ENCODE measurements at regions of chr4 and their contacts with region 1.

Region 1: GRCh38 chr4:38509551-38509950 is 154.4 kb upstream of the KLF3 start:
- DNase-seq: peak in 12 of 14 experiments; percentile 30 to 87 (median 46)
- ATAC-seq: peak; percentile 93
- H3K4me3 ChIP-seq: peak overlapping the region; percentile 65
- H3K4me3 Mint-ChIP-seq: peak overlapping the region; percentile 82
- H3K27ac ChIP-seq: peak overlapping the region; percentile 60 to 78
- H3K27ac Mint-ChIP-seq: peak overlapping the region; percentile 86
- H3K4me1 ChIP-seq: peaks cover 63% of the 10 kb centered on the region
- H3K4me1 Mint-ChIP-seq: peaks cover 84% of the 10 kb centered on the region
- H3K27me3 ChIP-seq: no peaks in the 10 kb centered on the region
- H3K27me3 Mint-ChIP-seq: no peaks in the 10 kb centered on the region
- CTCF ChIP-seq: no peak

Region 2: DNA sequence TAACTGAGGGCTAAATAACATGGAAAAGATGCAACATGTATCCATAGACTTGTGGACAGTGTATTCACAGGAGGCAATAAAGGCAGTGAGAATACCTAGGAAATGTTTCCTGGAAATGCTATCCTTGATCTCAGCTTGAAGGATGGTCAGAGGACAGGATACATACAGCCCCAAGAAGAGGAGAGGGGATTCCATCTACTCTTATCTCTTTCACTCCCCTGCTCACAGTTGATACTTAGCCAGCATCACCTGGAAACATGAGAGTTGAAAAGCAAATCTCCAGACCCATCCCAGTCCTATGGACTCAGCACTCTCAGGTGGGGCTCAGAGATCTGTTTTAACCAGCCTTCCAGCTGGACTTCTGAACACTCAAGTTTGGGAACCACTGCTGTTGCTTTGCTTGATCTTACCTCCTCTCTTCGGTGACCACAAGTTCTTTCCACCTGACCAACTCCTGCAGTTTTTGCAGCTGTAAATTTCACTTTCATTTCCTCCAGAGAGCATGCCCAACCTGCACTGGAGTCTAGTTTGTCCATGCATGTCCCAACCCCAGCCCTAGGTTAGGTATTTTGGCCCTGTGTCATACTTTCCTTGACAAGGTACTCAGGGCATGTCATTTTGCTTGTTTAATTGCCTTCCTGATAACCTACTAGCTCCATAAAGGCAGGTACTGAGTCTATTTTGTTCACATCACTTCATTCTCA is 833.8 kb before region 1 on chr4:
- CTCF ChIA-PET with region 1: no interaction called
- POLR2A ChIA-PET with region 1: no interaction called
- intact Hi-C with region 1: no loop called
- DNase-seq: peak in 3 of 14 experiments; percentile 16 to 56 (median 22)
- ATAC-seq: no peak
- H3K4me3 ChIP-seq: no peak overlapping the region
- H3K4me3 Mint-ChIP-seq: peak overlapping the region; percentile 3
- H3K27ac ChIP-seq: no peak overlapping the region
- H3K27ac Mint-ChIP-seq: no peak overlapping the region
- H3K4me1 ChIP-seq: peaks cover 16% of the 10 kb centered on the region
- H3K4me1 Mint-ChIP-seq: peaks cover 78% of the 10 kb centered on the region
- H3K27me3 ChIP-seq: no peaks in the 10 kb centered on the region
- H3K27me3 Mint-ChIP-seq: no peaks in the 10 kb centered on the region
- CTCF ChIP-seq: no peak

Region 3: GRCh38 chr4:38455092-38455862 is 54.3 kb before region 1 on chr4:
- CTCF ChIA-PET with region 1: no interaction called
- POLR2A ChIA-PET with region 1: no interaction called
- intact Hi-C with region 1: loop called in 1 of 2 experiments (anchors 5 kb)
- DNase-seq: peak in 2 of 14 experiments; percentile 22 to 23
- ATAC-seq: peak; percentile 44
- H3K4me3 ChIP-seq: no peak overlapping the region
- H3K4me3 Mint-ChIP-seq: peak overlapping the region; percentile 35
- H3K27ac ChIP-seq: no peak overlapping the region
- H3K27ac Mint-ChIP-seq: peak overlapping the region; percentile 66
- H3K4me1 ChIP-seq: peaks cover 9% of the 10 kb centered on the region
- H3K4me1 Mint-ChIP-seq: peaks cover 40% of the 10 kb centered on the region
- H3K27me3 ChIP-seq: no peaks in the 10 kb centered on the region
- H3K27me3 Mint-ChIP-seq: no peaks in the 10 kb centered on the region
- CTCF ChIP-seq: no peak

Region 4: GRCh38 chr4:38654273-38654672 is 144.7 kb after region 1 on chr4:
- CTCF ChIA-PET with region 1: no interaction called
- POLR2A ChIA-PET with region 1: interaction called, 11 read pairs
- intact Hi-C with region 1: no loop called
- DNase-seq: peak in 11 of 14 experiments; percentile 32 to 91 (median 48)
- ATAC-seq: peak; percentile 68
- H3K4me3 ChIP-seq: peak overlapping the region; percentile 36
- H3K4me3 Mint-ChIP-seq: peak overlapping the region; percentile 85
- H3K27ac ChIP-seq: peak overlapping the region; percentile 80 to 92
- H3K27ac Mint-ChIP-seq: peak overlapping the region; percentile 98
- H3K4me1 ChIP-seq: peaks cover 35% of the 10 kb centered on the region
- H3K4me1 Mint-ChIP-seq: peaks cover 55% of the 10 kb centered on the region
- H3K27me3 ChIP-seq: no peaks in the 10 kb centered on the region
- H3K27me3 Mint-ChIP-seq: no peaks in the 10 kb centered on the region
- CTCF ChIP-seq: no peak